ENCODE measurements at regions of chr17 and their contacts with region 1.

Region 1: DNA sequence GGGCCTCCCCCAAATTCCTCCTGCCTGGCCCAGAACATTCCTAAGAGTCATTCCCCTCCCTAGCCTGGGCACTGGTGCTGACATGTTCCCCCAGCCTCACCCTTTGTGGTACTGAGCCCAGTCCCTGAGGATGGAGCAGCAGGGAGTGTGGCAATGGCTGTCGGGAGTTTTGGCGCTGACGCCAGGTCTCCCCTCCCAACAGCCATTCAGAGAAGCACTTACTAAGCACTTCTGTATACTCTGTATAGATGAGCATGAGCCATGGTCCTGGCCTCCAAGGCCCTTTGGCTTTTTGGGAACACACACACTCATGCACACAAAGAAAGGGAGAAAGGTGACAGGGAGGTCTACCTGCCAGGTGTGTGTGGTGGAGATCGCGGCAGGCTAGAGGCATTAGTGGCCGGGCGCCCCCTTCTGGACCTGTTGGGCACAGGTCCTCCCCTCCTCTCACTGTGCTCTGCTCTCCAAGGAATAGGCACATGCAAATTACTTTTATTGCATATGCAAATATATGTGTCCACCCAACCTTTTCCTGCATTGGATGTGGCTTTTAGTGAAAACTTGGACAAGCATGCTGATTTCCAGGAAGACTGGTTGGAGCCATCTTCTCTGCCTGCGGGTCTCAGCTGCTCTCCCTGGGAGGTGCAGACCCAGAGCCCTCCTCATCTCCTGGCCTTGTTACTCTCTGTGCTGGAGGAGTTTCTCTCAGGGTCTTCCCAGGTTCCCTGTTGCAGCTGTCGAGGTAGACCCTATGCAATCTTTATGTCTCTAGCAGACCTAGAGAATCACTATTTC is 17.4 kb upstream of the C17orf107 start:
- DNase-seq: peak; percentile 85
- ATAC-seq: peak; percentile 84
- H3K4me3 ChIP-seq: no peak overlapping the region
- H3K27ac ChIP-seq: no peak overlapping the region
- H3K4me1 ChIP-seq: peaks cover 6% of the 10 kb centered on the region
- H3K27me3 ChIP-seq: no peaks in the 10 kb centered on the region
- CTCF ChIP-seq: peak; percentile 87

Region 2: GRCh38 chr17:4709794-4710692 is 171.9 kb before region 1 on chr17 and contains the start of gene ARRB2:
- intact Hi-C with region 1: loop called (anchors 10 kb)
- DNase-seq: peak; percentile 99
- ATAC-seq: peak; percentile 93
- H3K4me3 ChIP-seq: peak within 1 kb of the TSS; percentile 69
- H3K27ac ChIP-seq: peak within 1 kb of the TSS; percentile 83
- H3K4me1 ChIP-seq: peaks cover 20% of the 10 kb centered on the region
- H3K27me3 ChIP-seq: no peaks in the 10 kb centered on the region
- CTCF ChIP-seq: peak; percentile 61
- total RNA-seq, gene ARRB2: 131 TPM

Region 3: DNA sequence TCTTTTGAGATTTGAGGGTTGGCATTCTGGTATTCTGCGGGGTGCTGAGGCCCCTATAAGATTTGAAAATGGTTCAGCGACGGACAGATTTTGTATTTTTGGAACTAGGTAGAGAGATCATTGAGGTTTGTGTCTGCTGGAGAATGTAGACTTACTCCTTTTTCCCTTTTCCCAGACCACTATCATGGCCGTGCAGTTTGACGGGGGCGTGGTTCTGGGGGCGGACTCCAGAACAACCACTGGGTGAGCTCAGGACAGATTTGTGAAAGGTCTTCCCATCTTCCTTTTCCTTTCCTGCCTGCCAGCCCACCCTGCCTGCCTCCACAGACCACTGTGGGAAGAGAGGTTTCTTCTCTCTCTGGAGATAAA is 85.4 kb before region 1 on chr17:
- intact Hi-C with region 1: loop called (anchors 5 kb)
- DNase-seq: no peak
- ATAC-seq: peak; percentile 49
- H3K4me3 ChIP-seq: peak overlapping the region; percentile 98
- H3K27ac ChIP-seq: peak overlapping the region; percentile 81
- H3K4me1 ChIP-seq: peaks cover 13% of the 10 kb centered on the region
- H3K27me3 ChIP-seq: no peaks in the 10 kb centered on the region
- CTCF ChIP-seq: no peak

Region 4: GRCh38 chr17:5011928-5012327 is 130.0 kb after region 1 on chr17:
- intact Hi-C with region 1: no loop called
- DNase-seq: no peak
- ATAC-seq: no peak
- H3K4me3 ChIP-seq: no peak overlapping the region
- H3K27ac ChIP-seq: no peak overlapping the region
- H3K4me1 ChIP-seq: no peaks in the 10 kb centered on the region
- H3K27me3 ChIP-seq: no peaks in the 10 kb centered on the region
- CTCF ChIP-seq: no peak

Region 5: DNA sequence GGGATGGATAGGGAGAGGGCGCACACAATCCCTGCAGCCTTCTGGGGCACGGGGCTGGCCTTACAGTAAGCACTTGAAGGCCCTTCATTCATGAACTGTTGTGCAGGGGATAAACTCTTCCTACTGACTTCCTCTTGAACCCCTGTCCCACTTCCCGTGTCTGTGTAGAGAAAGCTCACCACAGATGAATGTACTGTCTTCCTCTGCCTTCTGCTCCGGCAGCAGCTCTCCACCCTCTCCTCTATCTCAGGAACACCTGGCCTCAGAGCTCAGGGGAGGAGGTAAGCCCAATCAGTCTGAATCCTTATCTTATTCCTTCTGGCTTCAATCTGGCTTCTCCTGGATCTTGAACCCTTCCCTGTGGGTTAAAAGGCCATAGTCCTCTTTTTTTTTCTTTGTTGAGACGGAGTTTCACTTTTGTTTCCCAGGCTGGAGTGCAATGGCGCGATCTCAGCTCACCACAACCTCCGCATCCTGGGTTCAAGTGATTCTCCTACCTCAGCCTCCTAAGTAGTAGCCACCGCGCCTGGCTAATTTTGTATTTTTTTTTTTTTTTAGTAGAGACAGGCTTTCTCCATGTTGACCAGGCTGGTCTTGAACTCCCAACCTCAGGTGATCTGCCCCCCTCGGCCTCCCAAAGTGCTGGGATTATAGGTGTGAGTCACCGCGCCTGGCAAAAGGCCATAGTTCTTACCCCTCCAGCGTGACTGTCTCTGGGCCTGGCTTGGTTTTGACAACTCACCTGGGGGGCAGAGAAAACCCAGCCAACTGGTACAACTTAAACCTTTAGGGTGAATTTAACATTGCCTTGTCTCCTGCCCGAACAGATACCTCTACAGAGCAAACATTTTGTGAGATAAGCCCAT is 160.4 kb after region 1 on chr17:
- intact Hi-C with region 1: no loop called
- DNase-seq: no peak
- ATAC-seq: no peak
- H3K4me3 ChIP-seq: no peak overlapping the region
- H3K27ac ChIP-seq: no peak overlapping the region
- H3K4me1 ChIP-seq: no peaks in the 10 kb centered on the region
- H3K27me3 ChIP-seq: no peaks in the 10 kb centered on the region
- CTCF ChIP-seq: no peak

Measured in upper lobe of right lung (tissue), 1 donor.